ENCODE measurements at regions of chr10 and their contacts with region 1.

Region 1: GRCh38 chr10:8053446-8054290 is 820 bp upstream of the GATA3 start:
- DNase-seq: peak; percentile 98
- ATAC-seq: peak; percentile 67
- H3K4me3 Mint-ChIP-seq: peak overlapping the region; percentile 96
- H3K27ac Mint-ChIP-seq: peak overlapping the region; percentile 94
- H3K4me1 Mint-ChIP-seq: peaks cover 39% of the 10 kb centered on the region
- H3K27me3 Mint-ChIP-seq: peaks cover 18% of the 10 kb centered on the region

Region 2: DNA sequence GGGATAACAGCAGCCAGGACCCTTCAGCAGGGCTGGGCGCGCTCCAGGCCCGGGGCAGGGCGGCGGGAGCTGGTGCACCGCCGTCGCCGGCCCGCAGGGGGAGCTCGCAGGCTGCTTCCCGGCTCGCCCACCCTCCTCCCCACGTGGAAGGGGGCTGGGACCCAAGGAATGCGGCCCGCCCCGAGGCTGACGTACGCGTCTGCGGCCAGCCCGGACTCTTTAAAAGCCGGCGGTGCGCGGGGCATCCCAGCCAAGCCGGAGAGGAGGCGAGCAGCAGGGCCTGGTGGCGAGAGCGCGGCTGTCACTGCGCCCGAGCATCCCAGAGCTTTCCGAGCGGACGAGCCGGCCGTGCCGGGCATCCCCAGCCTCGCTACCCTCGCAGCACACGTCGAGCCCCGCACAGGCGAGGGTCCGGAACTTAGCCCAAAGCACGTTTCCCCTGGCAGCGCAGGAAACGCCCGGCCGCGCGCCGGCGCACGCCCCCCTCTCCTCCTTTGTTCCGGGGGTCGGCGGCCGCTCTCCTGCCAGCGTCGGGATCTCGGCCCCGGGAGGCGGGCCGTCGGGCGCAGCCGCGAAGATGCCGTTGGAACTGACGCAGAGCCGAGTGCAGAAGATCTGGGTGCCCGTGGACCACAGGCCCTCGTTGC is 1850.9 kb before region 1 on chr10 and contains the start of gene PFKFB3:
- CTCF ChIA-PET with region 1: no interaction called
- POLR2A ChIA-PET with region 1: no interaction called
- intact Hi-C with region 1: loop called in 1 of 2 experiments (anchors 5 kb)
- DNase-seq: peak; percentile 98
- ATAC-seq: peak; percentile 64
- H3K4me3 Mint-ChIP-seq: peak within 1 kb of the TSS; percentile 89
- H3K27ac Mint-ChIP-seq: peak within 1 kb of the TSS; percentile 95
- H3K4me1 Mint-ChIP-seq: peaks cover 43% of the 10 kb centered on the region
- H3K27me3 Mint-ChIP-seq: no peaks in the 10 kb centered on the region
- total RNA-seq, gene PFKFB3: 133 to 183 TPM

Region 3: GRCh38 chr10:7787857-7788638 is 265.6 kb before region 1 on chr10 and contains the starts of genes ATP5F1C and KIN:
- CTCF ChIA-PET with region 1: no interaction called
- POLR2A ChIA-PET with region 1: no interaction called
- intact Hi-C with region 1: loop called in 1 of 2 experiments (anchors 2 kb)
- DNase-seq: peak; percentile 98
- ATAC-seq: peak; percentile 96
- H3K4me3 Mint-ChIP-seq: no peak within 1 kb of the TSS
- H3K27ac Mint-ChIP-seq: no peak within 1 kb of the TSS
- H3K4me1 Mint-ChIP-seq: peaks cover 54% of the 10 kb centered on the region
- H3K27me3 Mint-ChIP-seq: no peaks in the 10 kb centered on the region
- total RNA-seq, gene ATP5F1C: 317 to 396 TPM
- total RNA-seq, gene KIN: 15.0 to 15.1 TPM

Region 4: DNA sequence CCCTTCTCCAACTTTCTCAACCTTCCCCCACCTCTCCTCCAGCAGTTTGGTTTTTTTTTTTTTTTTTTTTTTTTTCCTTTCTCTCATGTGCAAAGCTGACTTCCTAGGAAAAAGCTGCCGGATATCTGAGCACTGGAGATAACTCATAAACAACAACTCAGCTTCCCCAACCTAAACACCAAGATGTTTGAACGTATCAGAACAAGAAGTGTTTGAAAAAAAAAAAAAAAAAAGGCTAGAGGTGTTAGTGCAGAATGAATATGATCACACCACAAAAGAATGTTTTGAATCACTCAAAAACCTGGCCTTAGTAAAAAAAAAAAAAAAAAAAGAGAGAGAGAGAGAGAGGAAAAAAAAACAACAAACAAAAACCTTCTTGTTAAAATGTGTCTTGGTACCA is 12.0 kb after region 1 on chr10:
- CTCF ChIA-PET with region 1: no interaction called
- POLR2A ChIA-PET with region 1: interaction called, 4 read pairs
- intact Hi-C with region 1: loop called (anchors 1 kb)
- DNase-seq: no peak
- ATAC-seq: peak; percentile 43
- H3K4me3 Mint-ChIP-seq: peak overlapping the region; percentile 64
- H3K27ac Mint-ChIP-seq: peak overlapping the region; percentile 90
- H3K4me1 Mint-ChIP-seq: peaks cover 95% of the 10 kb centered on the region
- H3K27me3 Mint-ChIP-seq: no peaks in the 10 kb centered on the region

Region 5: DNA sequence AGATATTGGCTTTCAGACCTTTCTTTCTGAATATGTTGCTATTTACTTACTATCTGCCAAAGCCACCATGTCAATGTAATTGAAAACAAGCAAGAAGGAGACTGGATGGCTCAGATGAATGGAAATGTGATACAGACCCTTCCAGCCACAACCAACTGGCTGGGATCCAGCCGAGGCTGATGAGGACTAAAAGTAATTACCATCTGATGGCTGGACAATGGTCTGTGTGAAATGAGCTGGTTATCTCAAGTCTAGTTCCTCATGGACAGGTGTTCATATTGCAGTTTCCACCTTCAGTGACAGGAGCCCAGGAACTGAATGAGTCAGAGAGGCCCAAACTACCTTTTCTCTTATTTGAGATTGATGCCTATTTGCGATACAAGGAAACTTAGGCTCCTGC is 268.3 kb after region 1 on chr10:
- CTCF ChIA-PET with region 1: interaction called, 3 read pairs
- POLR2A ChIA-PET with region 1: no interaction called
- intact Hi-C with region 1: loop called in 1 of 2 experiments (anchors 1 kb)
- DNase-seq: no peak
- ATAC-seq: no peak
- H3K4me3 Mint-ChIP-seq: no peak overlapping the region
- H3K27ac Mint-ChIP-seq: no peak overlapping the region
- H3K4me1 Mint-ChIP-seq: peaks cover 32% of the 10 kb centered on the region
- H3K27me3 Mint-ChIP-seq: peaks cover 2% of the 10 kb centered on the region

Region 6: GRCh38 chr10:8369666-8370065 is 316.0 kb after region 1 on chr10:
- CTCF ChIA-PET with region 1: no interaction called
- POLR2A ChIA-PET with region 1: no interaction called
- intact Hi-C with region 1: no loop called
- DNase-seq: no peak
- ATAC-seq: no peak
- H3K4me3 Mint-ChIP-seq: no peak overlapping the region
- H3K27ac Mint-ChIP-seq: no peak overlapping the region
- H3K4me1 Mint-ChIP-seq: peaks cover 25% of the 10 kb centered on the region
- H3K27me3 Mint-ChIP-seq: no peaks in the 10 kb centered on the region

Region 7: GRCh38 chr10:9010093-9010492 is 956.4 kb after region 1 on chr10:
- CTCF ChIA-PET with region 1: no interaction called
- POLR2A ChIA-PET with region 1: no interaction called
- intact Hi-C with region 1: loop called in 1 of 2 experiments (anchors 5 kb)
- DNase-seq: peak; percentile 42
- ATAC-seq: peak; percentile 80
- H3K4me3 Mint-ChIP-seq: peak overlapping the region; percentile 30
- H3K27ac Mint-ChIP-seq: peak overlapping the region; percentile 78
- H3K4me1 Mint-ChIP-seq: peaks cover 64% of the 10 kb centered on the region
- H3K27me3 Mint-ChIP-seq: peaks cover 2% of the 10 kb centered on the region

Region 8: DNA sequence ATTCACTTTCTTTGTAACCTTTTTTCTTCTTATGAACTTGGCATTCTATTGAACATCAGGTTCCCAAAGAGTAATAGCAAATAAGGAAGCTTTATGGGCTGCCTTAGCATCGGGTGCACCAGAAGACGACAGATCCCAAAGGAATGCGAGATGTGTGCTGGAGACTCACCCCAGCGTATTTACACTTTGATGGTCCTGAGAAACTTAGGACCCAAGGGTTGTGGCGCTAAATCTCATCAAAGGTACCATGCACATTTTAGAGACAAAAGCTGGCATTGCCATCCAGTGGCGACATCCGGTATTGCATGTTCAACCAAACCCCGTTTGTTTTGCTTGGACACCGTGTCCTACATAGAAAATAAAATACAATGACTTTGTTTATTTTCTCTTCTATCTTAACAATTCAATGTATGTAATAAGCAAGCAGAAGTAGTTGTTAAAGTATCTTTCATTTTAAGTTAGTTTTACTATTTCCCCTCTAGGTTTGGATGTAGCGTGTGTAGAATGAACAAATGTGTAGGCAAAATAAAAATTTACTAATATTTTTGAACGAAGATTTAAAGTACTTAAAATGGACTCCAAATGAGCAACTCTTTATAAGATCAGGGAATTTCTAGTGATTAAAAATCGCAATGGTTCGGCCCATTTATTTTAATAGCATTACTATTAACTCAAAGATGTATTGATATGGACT is 1155.6 kb after region 1 on chr10:
- CTCF ChIA-PET with region 1: no interaction called
- POLR2A ChIA-PET with region 1: no interaction called
- intact Hi-C with region 1: loop called (anchors 2 kb)
- DNase-seq: peak; percentile 85
- ATAC-seq: peak; percentile 53
- H3K4me3 Mint-ChIP-seq: no peak overlapping the region
- H3K27ac Mint-ChIP-seq: no peak overlapping the region
- H3K4me1 Mint-ChIP-seq: peaks cover 9% of the 10 kb centered on the region
- H3K27me3 Mint-ChIP-seq: peaks cover 5% of the 10 kb centered on the region

Measured in activated CD4-positive, alpha-beta T cell treated with anti-CD3 and anti-CD28 coated beads for 36 hours (primary cell).